ENCODE measurements at regions of chr16 and their contacts with region 1.

Region 1: DNA sequence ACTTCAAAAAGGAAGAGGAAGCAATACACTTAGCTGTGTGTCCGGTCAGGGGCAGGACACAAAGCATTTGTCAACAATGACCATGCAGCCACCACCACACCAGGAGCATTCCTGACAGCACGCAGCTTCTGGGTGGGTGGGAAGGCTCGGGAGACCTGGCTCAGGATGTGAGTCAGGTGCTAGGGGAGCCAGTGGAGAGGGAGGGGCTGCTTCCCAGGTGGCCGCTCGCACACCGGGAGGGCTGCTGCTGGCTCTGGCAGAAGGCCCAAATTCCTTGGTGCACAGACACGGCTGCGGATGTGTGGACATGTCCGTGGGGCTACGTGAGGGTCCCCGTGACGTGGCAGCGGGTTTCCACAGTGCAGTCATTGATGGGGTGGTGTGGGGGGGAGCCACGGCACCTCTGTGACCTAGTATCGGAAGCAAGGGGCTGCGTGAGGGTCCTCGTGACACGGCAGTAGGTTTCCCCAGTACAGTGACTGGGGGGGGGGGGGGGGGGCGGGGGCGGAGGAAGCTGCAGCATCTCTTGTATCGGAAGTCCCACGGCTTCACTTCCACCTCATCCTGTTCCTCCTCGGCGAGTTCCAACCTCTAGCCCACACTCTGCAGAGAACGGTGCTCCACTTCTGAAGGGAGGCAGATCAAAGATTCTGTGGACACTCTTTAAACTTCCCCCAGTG is 112.8 kb downstream of the ZNF778 start:
- DNase-seq: peak; percentile 63 to 83 (median 69)
- ATAC-seq: peak; percentile 26 to 56 (median 46)
- H3K4me3 ChIP-seq: no peak overlapping the region
- H3K27ac ChIP-seq: peak overlapping the region in 3 of 4 donors; percentile 33 to 42 (median 36)
- H3K4me1 ChIP-seq: peaks cover 5 to 29% (median 8%) of the 10 kb centered on the region in 3 donors
- H3K27me3 ChIP-seq: no peaks in the 10 kb centered on the region
- CTCF ChIP-seq: no peak

Region 2: GRCh38 chr16:89193021-89193575 is 137.2 kb before region 1 on chr16:
- intact Hi-C with region 1: no loop called
- DNase-seq: peak; percentile 61 to 93 (median 84)
- ATAC-seq: peak in 3 of 4 donors; percentile 54 to 85 (median 75)
- H3K4me3 ChIP-seq: no peak overlapping the region
- H3K27ac ChIP-seq: no peak overlapping the region
- H3K4me1 ChIP-seq: peaks cover 0 to 4% (median 0%) of the 10 kb centered on the region in 3 donors
- H3K27me3 ChIP-seq: no peaks in the 10 kb centered on the region
- CTCF ChIP-seq: no peak

Region 3: GRCh38 chr16:89502319-89502878 is 172.1 kb after region 1 on chr16:
- intact Hi-C with region 1: loop called in 2 of 3 experiments (anchors 5 to 10 kb)
- DNase-seq: peak; percentile 74 to 90 (median 85)
- ATAC-seq: peak; percentile 80 to 84 (median 82)
- H3K4me3 ChIP-seq: no peak overlapping the region
- H3K27ac ChIP-seq: peak overlapping the region; percentile 54 to 82 (median 68)
- H3K4me1 ChIP-seq: peaks cover 0 to 16% (median 7%) of the 10 kb centered on the region in 3 donors
- H3K27me3 ChIP-seq: no peaks in the 10 kb centered on the region
- CTCF ChIP-seq: no peak

Region 4: DNA sequence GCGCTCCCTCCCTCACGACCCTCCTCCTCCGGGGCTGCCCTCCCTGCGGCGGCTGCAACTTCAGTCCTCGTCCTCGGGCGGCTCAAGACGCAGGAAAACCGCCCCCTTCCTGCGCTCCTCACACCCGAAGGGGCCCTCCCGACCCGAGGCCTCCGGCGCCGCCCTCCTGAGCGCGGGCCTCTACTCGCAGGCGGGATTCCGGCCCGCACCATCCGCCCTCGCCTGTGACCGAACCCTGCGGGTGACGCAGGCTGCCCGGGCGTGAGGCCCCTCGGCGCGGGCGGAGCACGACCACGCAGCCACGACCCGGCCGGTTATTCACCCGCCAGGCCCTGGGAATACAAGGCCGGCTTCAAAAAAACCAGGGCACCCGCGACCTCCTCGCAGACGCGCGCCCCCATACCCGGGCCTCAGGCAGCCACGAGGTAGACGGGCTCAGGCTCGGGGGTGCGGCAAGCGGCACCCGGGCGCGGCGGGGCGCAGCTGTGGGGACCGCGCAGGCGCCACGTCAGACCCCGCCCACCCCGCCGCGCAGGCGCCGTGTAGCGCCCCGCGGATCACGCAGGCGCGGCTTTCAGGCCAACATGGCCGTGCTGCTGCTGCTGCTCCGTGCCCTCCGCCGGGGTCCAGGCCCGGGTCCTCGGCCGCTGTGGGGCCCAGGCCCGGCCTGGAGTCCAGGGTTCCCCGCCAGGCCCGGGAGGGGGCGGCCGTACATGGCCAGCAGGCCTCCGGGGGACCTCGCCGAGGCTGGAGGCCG is 177.7 kb after region 1 on chr16 and contains the start of gene SPG7:
- intact Hi-C with region 1: loop called in 2 of 3 experiments (anchors 5 to 10 kb)
- DNase-seq: peak; percentile 77 to 95 (median 90)
- ATAC-seq: peak; percentile 88 to 95 (median 95)
- H3K4me3 ChIP-seq: peak within 1 kb of the TSS; percentile 92 to 95 (median 94)
- H3K27ac ChIP-seq: peak within 1 kb of the TSS; percentile 81 to 89 (median 86)
- H3K4me1 ChIP-seq: peaks cover 0 to 25% (median 7%) of the 10 kb centered on the region in 3 donors
- H3K27me3 ChIP-seq: no peaks in the 10 kb centered on the region
- CTCF ChIP-seq: no peak
- total RNA-seq, gene SPG7: 25.7 to 56.2 (median 44.5) TPM

Measured in pancreas (tissue), 10 donors.